A673 (cell line): ENCODE measurements at regions of chr5 and their contacts with region 1.

Region 1: GRCh38 chr5:69093771-69094482 is at the start of gene SLC30A5:
- DNase-seq: peak; percentile 100
- H3K4me3 ChIP-seq: peak within 1 kb of the TSS; percentile 86
- H3K27ac ChIP-seq: peak within 1 kb of the TSS; percentile 96
- H3K4me1 ChIP-seq: peaks cover 6% of the 10 kb centered on the region
- H3K27me3 ChIP-seq: no peaks in the 10 kb centered on the region
- CTCF ChIP-seq: peak; percentile 94
- total RNA-seq, gene SLC30A5: 64.6 and 67.1 TPM in 2 replicates

Region 2: DNA sequence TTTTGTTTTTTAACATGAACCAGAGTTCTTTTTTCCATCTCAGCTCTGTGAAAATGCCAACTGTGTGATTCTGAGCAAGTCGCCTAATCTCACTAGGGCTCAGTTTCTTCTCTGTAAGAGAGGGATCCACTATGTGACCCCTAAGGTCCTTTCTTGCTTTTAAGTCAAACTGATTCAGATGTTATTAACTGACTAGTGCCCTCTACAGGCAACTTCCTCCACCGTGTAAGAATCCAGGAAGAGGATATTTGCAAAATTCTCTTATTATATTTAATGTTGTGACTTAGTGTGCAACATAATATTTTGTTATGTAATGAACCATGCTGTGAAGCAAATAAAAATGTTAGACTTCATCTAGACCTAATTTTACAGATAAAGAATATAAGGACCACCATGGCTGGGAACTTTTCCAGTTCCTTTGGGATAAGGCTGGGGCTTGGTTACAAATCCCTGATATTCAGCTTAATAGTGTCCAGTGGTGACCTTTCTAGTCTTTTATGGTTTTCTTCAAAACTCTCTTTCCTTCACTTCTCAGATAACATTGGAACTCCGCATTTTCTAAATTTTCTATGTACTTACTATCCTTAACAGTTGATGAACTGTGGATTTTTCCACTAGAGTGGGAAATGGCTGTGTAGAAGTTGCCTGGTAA is 633.7 kb before region 1 on chr5:
- CTCF ChIA-PET with region 1: no interaction called
- POLR2A ChIA-PET with region 1: interaction called, 10 read pairs
- intact Hi-C with region 1: no loop called
- DNase-seq: peak; percentile 74
- H3K4me3 ChIP-seq: no peak overlapping the region
- H3K27ac ChIP-seq: no peak overlapping the region
- H3K4me1 ChIP-seq: peaks cover 11% of the 10 kb centered on the region
- H3K27me3 ChIP-seq: no peaks in the 10 kb centered on the region
- CTCF ChIP-seq: peak; percentile 87

Region 3: DNA sequence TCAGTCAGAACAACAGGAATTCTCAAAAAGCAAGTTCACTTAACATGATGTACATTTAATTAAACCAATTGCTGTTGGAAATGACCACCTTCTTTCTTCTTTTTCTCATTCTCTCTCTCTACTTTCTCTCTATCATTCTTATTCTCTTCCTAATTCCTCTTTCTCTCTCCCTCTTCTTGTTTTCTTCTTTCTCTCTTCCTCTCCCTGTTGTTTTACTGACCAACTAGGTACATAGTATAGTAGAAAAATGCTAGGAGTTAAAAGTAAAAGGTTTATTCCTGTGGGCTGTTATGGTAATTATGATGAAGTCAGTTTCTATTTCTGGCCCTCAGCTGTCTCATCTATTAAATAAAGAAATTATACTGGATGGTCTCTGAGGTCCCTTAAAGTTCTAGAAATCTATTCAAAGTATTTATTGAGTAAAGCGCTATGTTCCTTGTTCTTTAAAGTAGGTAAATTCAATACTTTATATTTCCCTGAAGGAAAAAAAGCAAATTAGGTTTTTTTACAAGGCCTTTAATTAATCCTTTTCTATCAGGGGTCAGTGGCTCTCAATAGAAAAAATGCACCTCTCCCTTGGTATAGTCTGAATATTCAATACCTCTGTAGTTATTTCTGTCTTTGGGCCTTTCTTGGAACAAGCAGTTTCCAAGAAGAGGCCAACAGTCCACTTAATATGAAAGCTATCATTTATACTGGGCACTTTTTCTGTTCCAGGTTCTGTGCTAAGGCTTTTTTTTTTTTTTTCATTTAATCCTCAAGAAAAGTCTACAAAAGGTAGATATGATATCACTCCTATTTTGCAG is 102.4 kb before region 1 on chr5:
- CTCF ChIA-PET with region 1: no interaction called
- POLR2A ChIA-PET with region 1: no interaction called
- intact Hi-C with region 1: no loop called
- DNase-seq: no peak
- H3K4me3 ChIP-seq: no peak overlapping the region
- H3K27ac ChIP-seq: no peak overlapping the region
- H3K4me1 ChIP-seq: no peaks in the 10 kb centered on the region
- H3K27me3 ChIP-seq: no peaks in the 10 kb centered on the region
- CTCF ChIP-seq: no peak

Region 4: GRCh38 chr5:69050214-69050613 is 43.7 kb before region 1 on chr5:
- CTCF ChIA-PET with region 1: no interaction called
- POLR2A ChIA-PET with region 1: interaction called, 15 read pairs
- intact Hi-C with region 1: no loop called
- DNase-seq: no peak
- H3K4me3 ChIP-seq: no peak overlapping the region
- H3K27ac ChIP-seq: no peak overlapping the region
- H3K4me1 ChIP-seq: no peaks in the 10 kb centered on the region
- H3K27me3 ChIP-seq: no peaks in the 10 kb centered on the region
- CTCF ChIP-seq: no peak

Region 5: GRCh38 chr5:69217548-69218526 is 123.9 kb after region 1 on chr5:
- CTCF ChIA-PET with region 1: interaction called, 3 read pairs
- POLR2A ChIA-PET with region 1: no interaction called
- intact Hi-C with region 1: loop called (anchors 10 kb)
- DNase-seq: peak; percentile 94
- H3K4me3 ChIP-seq: peak overlapping the region; percentile 76
- H3K27ac ChIP-seq: peak overlapping the region; percentile 70
- H3K4me1 ChIP-seq: peaks cover 6% of the 10 kb centered on the region
- H3K27me3 ChIP-seq: no peaks in the 10 kb centered on the region
- CTCF ChIP-seq: no peak

Region 6: DNA sequence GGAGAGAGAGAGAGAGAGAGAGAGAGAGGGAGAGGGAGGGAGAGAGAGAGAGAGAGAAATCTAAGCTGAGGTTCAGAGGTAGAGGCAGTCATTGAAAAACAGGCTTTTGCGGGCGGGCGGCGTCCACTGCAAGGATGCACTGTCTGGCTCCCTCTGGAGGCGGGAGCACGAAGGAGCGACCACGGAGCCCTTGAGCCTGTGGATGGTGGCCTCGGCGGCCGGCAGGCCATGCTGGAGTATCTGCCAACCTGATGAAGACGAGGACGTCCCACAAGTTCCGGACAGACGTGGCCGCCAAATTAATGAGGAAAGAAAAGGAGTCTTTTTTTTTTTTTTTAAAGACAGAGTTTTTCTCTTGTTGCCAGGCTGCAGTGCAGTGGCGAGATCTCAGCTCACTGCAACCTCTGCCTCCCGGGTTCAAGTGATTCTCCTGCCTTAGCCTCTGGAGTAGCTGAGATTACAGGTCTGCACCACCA is 240.9 kb after region 1 on chr5:
- CTCF ChIA-PET with region 1: interaction called, 17 read pairs
- POLR2A ChIA-PET with region 1: no interaction called
- intact Hi-C with region 1: loop called (anchors 5 kb)
- DNase-seq: peak; percentile 86
- H3K4me3 ChIP-seq: no peak overlapping the region
- H3K27ac ChIP-seq: no peak overlapping the region
- H3K4me1 ChIP-seq: no peaks in the 10 kb centered on the region
- H3K27me3 ChIP-seq: no peaks in the 10 kb centered on the region
- CTCF ChIP-seq: peak; percentile 83

Region 7: GRCh38 chr5:69369369-69370121 is 275.6 kb after region 1 on chr5 and contains the starts of genes AK6, RAD17 and TAF9:
- CTCF ChIA-PET with region 1: no interaction called
- POLR2A ChIA-PET with region 1: no interaction called
- intact Hi-C with region 1: loop called (anchors 10 kb)
- DNase-seq: peak; percentile 93
- H3K4me3 ChIP-seq: peak within 1 kb of the TSS; percentile 65
- H3K27ac ChIP-seq: peak within 1 kb of the TSS; percentile 99
- H3K4me1 ChIP-seq: peaks cover 11% of the 10 kb centered on the region
- H3K27me3 ChIP-seq: no peaks in the 10 kb centered on the region
- CTCF ChIP-seq: no peak
- total RNA-seq, gene AK6: 69.4 and 97.5 TPM in 2 replicates
- total RNA-seq, gene RAD17: 19.3 and 27.1 TPM in 2 replicates
- total RNA-seq, gene TAF9: 77.2 and 91.4 TPM in 2 replicates

Region 8: DNA sequence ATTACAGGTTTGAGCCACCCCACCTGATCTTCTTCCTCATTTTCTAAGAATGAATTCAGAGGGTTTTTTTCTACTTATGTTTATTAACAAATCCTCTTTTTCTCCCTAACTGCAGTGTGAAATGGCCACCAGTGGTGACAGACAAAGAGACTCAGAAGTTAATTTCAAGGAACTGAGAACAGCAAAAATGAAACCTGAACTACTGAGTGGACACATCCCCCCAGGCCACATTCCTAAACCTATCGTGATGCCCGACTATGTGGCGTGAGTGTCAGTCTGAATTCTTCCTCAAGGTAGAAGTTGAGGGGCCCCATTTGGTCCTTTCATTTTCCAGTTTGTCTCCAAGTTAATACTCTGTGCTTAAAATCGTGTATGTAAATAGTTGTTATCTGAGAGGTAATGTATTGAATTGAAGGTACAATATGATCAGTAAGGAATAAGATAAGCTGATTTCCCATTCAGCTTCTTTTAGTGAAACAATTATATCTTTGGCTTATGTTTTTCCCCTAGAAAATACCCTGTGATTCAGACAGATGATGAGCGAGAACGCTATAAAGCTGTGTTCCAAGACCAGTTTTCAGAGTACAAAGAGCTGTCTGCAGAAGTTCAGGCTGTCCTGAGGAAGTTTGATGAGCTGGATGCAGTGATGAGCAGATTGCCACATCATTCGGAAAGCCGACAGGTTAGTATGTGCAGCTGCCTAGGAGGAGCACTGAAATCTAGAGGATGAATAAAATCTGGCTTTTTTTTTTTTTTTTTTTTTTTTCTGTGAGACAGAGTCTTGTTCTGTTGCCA is 338.7 kb after region 1 on chr5:
- CTCF ChIA-PET with region 1: no interaction called
- POLR2A ChIA-PET with region 1: no interaction called
- intact Hi-C with region 1: no loop called
- DNase-seq: no peak
- H3K4me3 ChIP-seq: no peak overlapping the region
- H3K27ac ChIP-seq: no peak overlapping the region
- H3K4me1 ChIP-seq: peaks cover 6% of the 10 kb centered on the region
- H3K27me3 ChIP-seq: no peaks in the 10 kb centered on the region
- CTCF ChIP-seq: no peak

Region 9: GRCh38 chr5:69454460-69455249 is 360.7 kb after region 1 on chr5:
- CTCF ChIA-PET with region 1: no interaction called
- POLR2A ChIA-PET with region 1: no interaction called
- intact Hi-C with region 1: no loop called
- DNase-seq: no peak
- H3K4me3 ChIP-seq: no peak overlapping the region
- H3K27ac ChIP-seq: no peak overlapping the region
- H3K4me1 ChIP-seq: no peaks in the 10 kb centered on the region
- H3K27me3 ChIP-seq: no peaks in the 10 kb centered on the region
- CTCF ChIP-seq: no peak